ENCODE measurements at regions of chr16 and their contacts with region 1.

Region 1: GRCh38 chr16:55765161-55765560 is 67.7 kb downstream of the CES1 start:
- DNase-seq: no peak
- H3K4me3 Mint-ChIP-seq: no peak overlapping the region
- H3K27ac Mint-ChIP-seq: no peak overlapping the region
- H3K4me1 Mint-ChIP-seq: no peaks in the 10 kb centered on the region
- H3K27me3 Mint-ChIP-seq: peaks cover 11% of the 10 kb centered on the region

Region 2: GRCh38 chr16:55828680-55829079 is 63.5 kb after region 1 on chr16:
- CTCF ChIA-PET with region 1: no interaction called
- intact Hi-C with region 1: loop called (anchors 2 kb)
- DNase-seq: no peak
- H3K4me3 Mint-ChIP-seq: no peak overlapping the region
- H3K27ac Mint-ChIP-seq: no peak overlapping the region
- H3K4me1 Mint-ChIP-seq: no peaks in the 10 kb centered on the region
- H3K27me3 Mint-ChIP-seq: peaks cover 10% of the 10 kb centered on the region

Region 3: DNA sequence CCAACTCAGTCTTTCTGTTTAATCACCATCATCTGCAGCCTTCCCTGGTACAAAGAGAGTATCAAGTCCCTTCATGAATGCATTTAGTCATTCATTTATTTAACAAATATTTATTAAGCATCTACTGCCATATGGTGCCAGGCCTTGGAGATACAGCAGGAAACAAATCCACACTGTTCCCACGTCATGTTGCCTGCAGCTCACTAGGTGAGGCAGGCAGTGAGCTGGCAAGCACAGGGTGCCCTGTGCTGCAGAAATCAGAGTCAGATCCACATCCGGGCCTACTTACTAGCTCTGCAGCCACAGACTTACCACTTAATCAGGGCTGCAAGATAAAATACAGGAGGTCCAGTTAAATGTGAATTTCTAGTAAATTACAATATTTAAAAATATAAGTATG is 148.6 kb after region 1 on chr16:
- CTCF ChIA-PET with region 1: no interaction called
- intact Hi-C with region 1: no loop called
- DNase-seq: no peak
- H3K4me3 Mint-ChIP-seq: no peak overlapping the region
- H3K27ac Mint-ChIP-seq: no peak overlapping the region
- H3K4me1 Mint-ChIP-seq: no peaks in the 10 kb centered on the region
- H3K27me3 Mint-ChIP-seq: peaks cover 14% of the 10 kb centered on the region

Measured in activated naive CD4-positive, alpha-beta T cell treated with anti-CD3 and anti-CD28 coated beads for 36 hours (primary cell).